ENCODE measurements at regions of chr6 and their contacts with region 1.

Region 1: GRCh38 chr6:87407901-87408720 is at the start of gene CFAP206:
- DNase-seq: peak; percentile 50 to 90 (median 77)
- ATAC-seq: peak; percentile 77
- H3K4me3 ChIP-seq: peak within 1 kb of the TSS; percentile 65 to 91
- H3K4me3 Mint-ChIP-seq: peak within 1 kb of the TSS; percentile 87
- H3K27ac ChIP-seq: peak within 1 kb of the TSS; percentile 64 to 71
- H3K27ac Mint-ChIP-seq: peak within 1 kb of the TSS; percentile 57
- H3K4me1 ChIP-seq: peaks cover 10% of the 10 kb centered on the region
- H3K4me1 Mint-ChIP-seq: peaks cover 7% of the 10 kb centered on the region
- H3K27me3 ChIP-seq: peaks cover 3 to 5% of the 10 kb centered on the region in 2 experiments
- H3K27me3 Mint-ChIP-seq: peaks cover 17% of the 10 kb centered on the region
- CTCF ChIP-seq: no peak
- total RNA-seq, gene CFAP206: not detected

Region 2: GRCh38 chr6:87154993-87155841 is 252.9 kb before region 1 on chr6 and contains the start of gene ZNF292:
- CTCF ChIA-PET with region 1: no interaction called
- POLR2A ChIA-PET with region 1: interaction called, 4 read pairs
- intact Hi-C with region 1: loop called (anchors 1 to 2 kb)
- DNase-seq: peak; percentile 85 to 98 (median 95)
- ATAC-seq: peak; percentile 67
- H3K4me3 ChIP-seq: peak within 1 kb of the TSS; percentile 73 to 80
- H3K4me3 Mint-ChIP-seq: peak within 1 kb of the TSS; percentile 96
- H3K27ac ChIP-seq: peak within 1 kb of the TSS; percentile 85 to 95
- H3K27ac Mint-ChIP-seq: peak within 1 kb of the TSS; percentile 98
- H3K4me1 ChIP-seq: peaks cover 54% of the 10 kb centered on the region
- H3K4me1 Mint-ChIP-seq: peaks cover 58% of the 10 kb centered on the region
- H3K27me3 ChIP-seq: no peaks in the 10 kb centered on the region
- H3K27me3 Mint-ChIP-seq: no peaks in the 10 kb centered on the region
- CTCF ChIP-seq: no peak
- total RNA-seq, gene ZNF292: 82.6 to 87.6 TPM

Region 3: DNA sequence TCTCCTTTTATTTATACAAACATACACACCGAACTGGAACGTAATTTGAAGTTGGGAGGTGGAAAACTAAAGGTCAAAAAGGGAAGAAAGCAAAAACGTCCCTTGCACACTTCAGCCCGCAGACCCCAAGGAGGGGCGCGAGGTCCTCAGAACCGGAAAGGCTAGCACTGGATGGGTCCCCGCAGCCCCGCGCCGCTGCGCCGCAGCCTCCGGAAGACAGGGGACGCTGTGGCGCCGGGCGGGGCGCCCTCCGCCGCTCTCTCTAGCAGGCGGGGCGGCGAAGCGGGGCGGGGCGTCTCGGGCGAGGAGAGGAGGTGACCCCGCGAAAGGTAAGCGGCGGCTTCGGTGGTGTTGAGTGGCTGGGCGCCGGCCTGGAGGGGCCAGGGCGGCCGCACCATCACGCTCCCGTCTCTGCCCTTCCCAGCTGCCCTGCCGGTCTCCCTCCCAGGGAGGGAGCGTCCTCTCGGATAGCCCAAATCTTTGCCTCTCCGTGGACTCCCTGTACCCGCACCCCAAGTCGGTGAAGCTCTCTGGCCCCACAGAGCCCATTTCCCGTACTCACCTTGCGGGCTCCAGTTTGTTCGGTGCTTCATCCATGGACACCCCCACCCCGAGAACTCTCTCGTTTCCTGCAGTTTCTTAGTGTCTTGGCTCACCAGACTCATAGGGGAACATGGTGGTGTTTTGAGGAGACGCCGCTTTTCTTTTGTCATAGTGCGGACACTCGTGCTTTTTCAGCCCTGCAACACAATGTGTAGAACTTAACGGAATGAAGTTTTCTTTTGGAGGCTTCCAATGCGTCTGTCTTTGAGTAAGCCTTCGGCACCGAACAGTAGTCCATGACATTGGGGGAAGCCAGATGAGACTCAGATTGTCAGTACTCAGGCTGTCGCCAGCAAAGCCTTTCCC is 85.6 kb before region 1 on chr6 and contains the start of gene SMIM8:
- CTCF ChIA-PET with region 1: no interaction called
- POLR2A ChIA-PET with region 1: no interaction called
- intact Hi-C with region 1: loop called (anchors 2 to 5 kb)
- DNase-seq: peak; percentile 66 to 90 (median 86)
- ATAC-seq: peak; percentile 99
- H3K4me3 ChIP-seq: peak within 1 kb of the TSS; percentile 72 to 86
- H3K4me3 Mint-ChIP-seq: peak within 1 kb of the TSS; percentile 94
- H3K27ac ChIP-seq: peak within 1 kb of the TSS; percentile 52 to 58
- H3K27ac Mint-ChIP-seq: peak within 1 kb of the TSS; percentile 90
- H3K4me1 ChIP-seq: peaks cover 6% of the 10 kb centered on the region
- H3K4me1 Mint-ChIP-seq: peaks cover 25% of the 10 kb centered on the region
- H3K27me3 ChIP-seq: no peaks in the 10 kb centered on the region
- H3K27me3 Mint-ChIP-seq: no peaks in the 10 kb centered on the region
- CTCF ChIP-seq: peak; percentile 99
- total RNA-seq, gene SMIM8: 4.2 TPM

Region 4: GRCh38 chr6:87393022-87393622 is 15.0 kb before region 1 on chr6:
- CTCF ChIA-PET with region 1: interaction called, 20 read pairs
- POLR2A ChIA-PET with region 1: no interaction called
- intact Hi-C with region 1: loop called in 1 of 2 experiments (anchors 1 kb)
- DNase-seq: peak in 7 of 9 experiments; percentile 8 to 79 (median 29)
- ATAC-seq: peak; percentile 99
- H3K4me3 ChIP-seq: no peak overlapping the region
- H3K4me3 Mint-ChIP-seq: no peak overlapping the region
- H3K27ac ChIP-seq: no peak overlapping the region
- H3K27ac Mint-ChIP-seq: no peak overlapping the region
- H3K4me1 ChIP-seq: no peaks in the 10 kb centered on the region
- H3K4me1 Mint-ChIP-seq: peaks cover 3% of the 10 kb centered on the region
- H3K27me3 ChIP-seq: no peaks in the 10 kb centered on the region
- H3K27me3 Mint-ChIP-seq: no peaks in the 10 kb centered on the region
- CTCF ChIP-seq: peak; percentile 72

Region 5: DNA sequence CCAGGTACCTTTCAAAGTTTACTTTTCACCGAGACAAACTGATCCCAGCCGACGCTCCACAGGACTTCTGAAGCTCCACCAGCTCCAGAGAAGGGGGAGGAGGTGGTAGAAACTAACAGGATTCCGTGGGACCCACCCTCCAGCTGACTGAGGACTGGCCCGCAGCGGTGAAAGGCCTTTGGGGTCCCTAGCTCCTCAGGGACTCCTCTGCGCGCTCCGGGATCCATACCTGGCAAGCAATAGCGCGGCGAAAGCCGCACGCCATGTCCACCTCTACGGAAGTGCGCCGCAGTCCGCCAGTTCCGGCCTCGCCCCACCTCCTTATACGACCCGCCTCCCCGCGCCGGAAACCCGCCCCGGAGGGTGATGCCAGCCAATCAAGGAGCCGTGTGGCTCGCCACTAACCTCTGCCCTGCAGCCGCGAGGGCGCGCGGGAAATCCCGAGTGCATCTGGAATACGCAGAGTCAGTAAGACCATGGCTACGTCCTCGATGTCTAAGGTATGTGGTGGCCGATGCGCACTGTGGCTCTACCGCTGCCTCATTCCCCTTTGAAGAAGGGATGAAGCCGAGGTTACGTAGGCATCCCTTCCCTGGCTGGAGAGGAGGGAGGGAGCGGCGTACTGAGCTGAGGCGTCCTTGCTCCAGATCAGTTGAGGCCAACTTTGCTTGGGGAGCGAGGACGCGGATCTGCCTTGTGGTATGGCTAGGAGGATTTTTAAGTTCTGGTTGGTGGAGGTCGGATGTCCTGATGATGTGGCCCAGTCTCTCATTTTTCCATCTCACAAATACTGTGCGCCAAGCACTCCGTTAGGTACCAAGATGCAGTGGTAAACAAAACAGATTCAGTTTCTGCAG is 181.8 kb after region 1 on chr6 and contains the starts of genes ORC3 and RARS2:
- CTCF ChIA-PET with region 1: no interaction called
- POLR2A ChIA-PET with region 1: no interaction called
- intact Hi-C with region 1: loop called (anchors 2 to 5 kb)
- DNase-seq: peak; percentile 85 to 96 (median 93)
- ATAC-seq: peak; percentile 98
- H3K4me3 ChIP-seq: peak within 1 kb of the TSS; percentile 69 to 89
- H3K4me3 Mint-ChIP-seq: peak within 1 kb of the TSS; percentile 93
- H3K27ac ChIP-seq: peak within 1 kb of the TSS; percentile 60 to 78
- H3K27ac Mint-ChIP-seq: peak within 1 kb of the TSS; percentile 92
- H3K4me1 ChIP-seq: peaks cover 35% of the 10 kb centered on the region
- H3K4me1 Mint-ChIP-seq: peaks cover 64% of the 10 kb centered on the region
- H3K27me3 ChIP-seq: no peaks in the 10 kb centered on the region
- H3K27me3 Mint-ChIP-seq: no peaks in the 10 kb centered on the region
- CTCF ChIP-seq: no peak
- total RNA-seq, gene ORC3: 9.4 to 9.9 TPM
- total RNA-seq, gene RARS2: 15.8 to 20.4 TPM

Measured in CD8-positive, alpha-beta T cell (primary cell).